ENCODE measurements at regions of chr12 and their contacts with region 1.

Region 1: DNA sequence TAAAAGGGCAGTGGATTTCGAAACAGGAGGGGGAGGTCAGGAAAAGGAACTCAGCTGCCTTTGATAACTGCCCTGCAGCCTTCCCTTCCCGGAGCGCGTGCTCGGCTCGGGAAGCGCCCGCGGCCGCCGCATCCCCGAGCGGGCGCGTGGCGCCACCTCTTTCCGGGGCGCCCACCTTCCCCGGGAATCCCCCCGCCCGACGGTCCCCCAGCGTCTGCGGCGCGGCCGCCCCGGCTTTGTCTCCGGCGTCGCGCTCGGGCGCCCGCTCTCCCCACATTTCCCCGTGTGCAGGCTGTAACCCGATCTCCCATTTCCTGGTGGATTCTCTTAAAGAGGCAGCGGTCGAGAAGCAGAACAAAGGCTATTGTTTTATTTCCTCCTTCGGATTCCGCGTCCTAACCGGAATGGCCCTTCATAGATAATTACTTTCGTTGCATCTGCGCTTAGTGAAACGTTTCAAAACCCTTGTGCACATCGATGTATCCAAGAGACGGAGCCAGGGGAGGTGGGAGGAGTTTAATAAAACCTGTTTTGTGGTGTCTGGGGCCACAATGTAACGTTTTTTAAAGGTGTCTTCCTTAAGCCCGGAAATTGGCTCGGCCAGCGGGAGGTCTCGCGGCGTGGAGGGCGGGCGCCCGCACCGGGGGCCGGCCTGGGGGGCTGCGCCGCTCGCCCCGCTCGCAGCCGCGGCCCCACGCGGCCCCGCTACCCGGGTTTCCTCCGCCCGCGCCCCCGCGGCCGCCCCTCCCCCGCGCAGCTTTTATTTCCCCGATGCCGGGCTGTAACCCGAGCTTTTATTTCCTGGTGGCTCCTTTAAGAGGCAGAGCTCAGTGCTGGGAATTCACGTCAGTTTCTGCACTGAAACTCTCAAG is at the start of gene ETV6:
- DNase-seq: peak; percentile 75 to 83 (median 77)
- ATAC-seq: peak; percentile 46 to 83 (median 67)
- H3K4me3 ChIP-seq: peak within 1 kb of the TSS; percentile 55 to 94 (median 85)
- H3K27ac ChIP-seq: peak within 1 kb of the TSS; percentile 89 to 100 (median 98)
- H3K4me1 ChIP-seq: peaks cover 0 to 35% (median 23%) of the 10 kb centered on the region in 12 donors
- H3K27me3 ChIP-seq: no peaks in the 10 kb centered on the region
- CTCF ChIP-seq: peak in 2 of 12 donors; percentile 7 to 15
- POLR2A ChIP-seq: peak in 1 of 2 donors; percentile 45
- total RNA-seq, gene ETV6: 7.1 to 37.3 (median 14.4) TPM

Region 2: GRCh38 chr12:11427341-11427740 is 221.7 kb before region 1 on chr12:
- intact Hi-C with region 1: no loop called
- DNase-seq: no peak
- ATAC-seq: no peak
- H3K4me3 ChIP-seq: no peak overlapping the region
- H3K27ac ChIP-seq: no peak overlapping the region
- H3K4me1 ChIP-seq: no peaks in the 10 kb centered on the region
- H3K27me3 ChIP-seq: no peaks in the 10 kb centered on the region
- CTCF ChIP-seq: no peak
- POLR2A ChIP-seq: no peak

Region 3: DNA sequence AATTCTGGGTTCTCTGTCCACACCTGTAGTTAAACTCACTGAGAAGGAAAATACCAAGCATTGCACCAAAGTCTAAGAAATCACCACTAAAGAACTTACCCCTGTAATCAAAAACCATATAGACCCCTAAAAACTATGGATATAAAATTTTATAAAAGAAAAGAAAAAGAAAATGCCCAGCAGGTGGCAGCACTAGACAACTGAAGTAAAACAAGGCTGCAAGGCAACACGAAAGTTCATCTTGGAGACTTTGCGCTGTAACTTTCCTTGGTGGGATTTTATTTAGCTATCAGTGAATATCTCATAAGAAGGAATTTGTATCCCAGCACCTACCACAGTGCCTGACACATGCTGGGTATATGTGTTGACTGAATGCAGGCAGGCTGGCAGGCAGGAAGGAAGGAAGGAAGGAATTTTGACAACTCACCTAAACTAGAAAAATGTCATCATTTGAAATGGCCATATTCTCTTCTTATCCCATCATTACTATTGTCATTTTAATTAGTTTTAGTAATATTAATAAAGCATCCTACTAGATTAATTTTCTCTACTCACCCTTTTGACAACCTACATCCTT is 67.8 kb before region 1 on chr12:
- intact Hi-C with region 1: loop called in 2 of 10 experiments (anchors 2 to 10 kb)
- DNase-seq: peak in 4 of 5 donors; percentile 44 to 63 (median 57)
- ATAC-seq: peak in 1 of 4 donors; percentile 31
- H3K4me3 ChIP-seq: no peak overlapping the region
- H3K27ac ChIP-seq: no peak overlapping the region
- H3K4me1 ChIP-seq: peaks cover 0 to 25% (median 0%) of the 10 kb centered on the region in 12 donors
- H3K27me3 ChIP-seq: no peaks in the 10 kb centered on the region
- CTCF ChIP-seq: peak; percentile 49 to 81 (median 72)
- POLR2A ChIP-seq: no peak

Region 4: DNA sequence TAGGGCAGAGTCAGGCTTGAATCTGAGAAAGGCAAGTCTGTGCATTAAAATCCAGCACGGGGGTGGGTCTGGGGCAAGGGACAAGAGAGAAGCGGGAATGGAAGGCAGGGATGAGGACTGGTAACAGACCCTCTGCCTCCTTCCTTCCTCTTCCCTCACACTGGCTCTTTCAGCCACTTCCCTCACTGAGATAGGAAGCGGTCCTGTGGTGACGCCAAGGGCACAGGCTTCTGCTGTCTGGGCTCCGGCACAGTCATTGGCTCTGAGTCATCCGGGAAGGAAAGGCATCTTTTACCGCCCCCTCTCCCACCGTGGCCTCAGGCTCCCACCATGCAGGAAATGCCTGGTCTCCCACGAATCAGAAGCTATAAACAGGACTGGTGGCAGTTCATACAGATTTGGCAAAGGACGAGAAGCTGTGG is 70.6 kb after region 1 on chr12:
- intact Hi-C with region 1: loop called in 3 of 10 experiments (anchors 5 kb)
- DNase-seq: peak; percentile 65 to 82 (median 67)
- ATAC-seq: peak; percentile 35 to 90 (median 82)
- H3K4me3 ChIP-seq: no peak overlapping the region
- H3K27ac ChIP-seq: peak overlapping the region in 7 of 12 donors; percentile 22 to 80 (median 44)
- H3K4me1 ChIP-seq: peaks cover 0 to 81% (median 37%) of the 10 kb centered on the region in 12 donors
- H3K27me3 ChIP-seq: no peaks in the 10 kb centered on the region
- CTCF ChIP-seq: no peak
- POLR2A ChIP-seq: no peak

Region 5: DNA sequence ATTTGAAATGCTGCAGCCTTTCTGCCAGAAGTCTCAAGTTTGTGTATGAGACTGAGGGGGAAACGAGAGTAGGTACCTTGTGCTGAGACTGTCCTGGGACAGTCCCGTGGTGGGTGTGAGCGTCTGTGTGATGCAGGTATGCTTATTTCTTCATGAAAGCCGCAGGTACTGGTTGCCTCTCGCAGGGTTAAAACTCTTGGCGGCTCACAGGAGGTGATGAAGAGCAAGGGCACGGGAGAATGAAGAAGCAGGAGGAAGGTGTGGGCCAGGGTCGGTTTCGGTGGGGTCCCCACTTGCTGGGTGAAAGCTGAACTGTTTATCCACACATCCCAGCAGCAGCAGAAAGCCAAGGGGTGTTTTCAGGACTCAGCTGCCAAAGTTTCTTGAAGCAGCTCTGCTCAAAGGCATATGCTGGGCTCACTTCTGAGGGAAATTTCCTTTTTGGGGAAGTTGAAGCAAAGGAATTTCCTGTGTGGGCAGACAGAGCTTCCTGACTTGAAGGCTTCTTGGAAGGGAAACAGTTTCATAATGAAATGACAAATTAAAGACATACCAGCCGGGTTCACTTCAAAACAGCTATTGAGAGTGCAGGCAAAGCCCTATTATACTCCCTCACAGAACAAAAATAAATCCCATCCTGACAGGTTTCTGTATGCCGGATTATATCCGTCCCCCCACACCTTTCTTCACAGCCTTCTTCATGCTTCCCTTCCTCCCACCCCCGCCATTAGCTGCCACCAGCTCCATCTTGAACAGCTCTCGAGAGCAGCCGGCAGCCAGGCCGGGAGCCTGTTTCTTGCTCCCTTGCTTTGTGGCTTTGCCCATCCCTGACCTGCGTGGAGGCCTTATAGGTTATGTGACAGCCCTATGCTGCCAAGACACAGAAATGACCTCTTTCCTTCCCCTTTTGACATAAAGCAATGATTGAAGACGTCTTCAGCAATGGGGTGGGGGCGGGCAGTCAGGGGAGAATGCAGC is 117.0 kb after region 1 on chr12:
- intact Hi-C with region 1: loop called in 1 of 10 experiments (anchors 5 kb)
- DNase-seq: peak in 4 of 5 donors; percentile 27 to 54 (median 38)
- ATAC-seq: peak; percentile 43 to 75 (median 65)
- H3K4me3 ChIP-seq: peak overlapping the region in 6 of 12 donors; percentile 2 to 23 (median 7)
- H3K27ac ChIP-seq: peak overlapping the region in 11 of 12 donors; percentile 64 to 90 (median 81)
- H3K4me1 ChIP-seq: peaks cover 5 to 98% (median 71%) of the 10 kb centered on the region in 12 donors
- H3K27me3 ChIP-seq: no peaks in the 10 kb centered on the region
- CTCF ChIP-seq: no peak
- POLR2A ChIP-seq: no peak

Region 6: GRCh38 chr12:11862798-11863197 is 213.7 kb after region 1 on chr12:
- intact Hi-C with region 1: loop called in 6 of 10 experiments (anchors 5 to 10 kb)
- DNase-seq: peak in 1 of 5 donors; percentile 38
- ATAC-seq: peak; percentile 51 to 79 (median 68)
- H3K4me3 ChIP-seq: peak overlapping the region in 1 of 12 donors; percentile 3
- H3K27ac ChIP-seq: peak overlapping the region; percentile 70 to 90 (median 84)
- H3K4me1 ChIP-seq: peaks cover 8 to 55% (median 47%) of the 10 kb centered on the region in 12 donors
- H3K27me3 ChIP-seq: no peaks in the 10 kb centered on the region
- CTCF ChIP-seq: no peak
- POLR2A ChIP-seq: no peak

Region 7: DNA sequence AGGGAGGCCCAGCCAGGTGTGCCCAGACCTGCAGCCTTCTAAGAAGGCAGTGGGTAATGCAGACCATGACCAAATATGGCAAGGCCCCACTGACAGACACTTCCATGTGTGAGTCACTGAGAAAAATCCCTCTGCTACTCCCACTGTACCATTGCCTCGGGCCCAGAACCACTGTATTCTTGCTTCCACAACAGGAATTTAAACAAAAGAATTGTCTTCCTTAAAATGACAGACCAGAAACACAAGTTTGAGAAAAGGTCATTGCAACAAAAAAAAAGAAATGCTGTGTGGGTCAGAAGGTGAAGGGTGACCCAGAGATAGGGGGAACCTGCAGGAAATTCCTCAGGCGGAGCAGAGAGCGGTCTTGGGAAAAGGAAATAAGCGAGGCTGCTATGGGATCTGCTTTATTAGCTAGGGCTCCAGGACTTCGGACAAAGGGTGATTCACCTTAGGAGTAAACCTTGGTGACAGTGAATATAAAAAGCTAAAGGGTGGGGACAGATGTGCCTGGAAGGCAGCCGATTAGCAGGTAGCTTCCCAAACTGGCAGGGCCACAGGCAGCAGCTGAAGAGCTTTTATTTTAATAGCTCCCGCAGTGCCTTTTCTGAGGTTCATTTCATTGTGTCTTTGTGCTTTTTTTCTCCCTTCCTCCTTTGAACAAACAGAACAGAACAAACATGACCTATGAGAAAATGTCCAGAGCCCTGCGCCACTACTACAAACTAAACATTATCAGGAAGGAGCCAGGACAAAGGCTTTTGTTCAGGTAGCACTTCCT is 236.4 kb after region 1 on chr12:
- intact Hi-C with region 1: loop called in 7 of 10 experiments (anchors 5 to 10 kb)
- DNase-seq: peak in 1 of 5 donors; percentile 35
- ATAC-seq: peak; percentile 23 to 81 (median 70)
- H3K4me3 ChIP-seq: no peak overlapping the region
- H3K27ac ChIP-seq: peak overlapping the region in 11 of 12 donors; percentile 32 to 89 (median 54)
- H3K4me1 ChIP-seq: peaks cover 0 to 57% (median 19%) of the 10 kb centered on the region in 12 donors
- H3K27me3 ChIP-seq: no peaks in the 10 kb centered on the region
- CTCF ChIP-seq: no peak
- POLR2A ChIP-seq: no peak

Region 8: DNA sequence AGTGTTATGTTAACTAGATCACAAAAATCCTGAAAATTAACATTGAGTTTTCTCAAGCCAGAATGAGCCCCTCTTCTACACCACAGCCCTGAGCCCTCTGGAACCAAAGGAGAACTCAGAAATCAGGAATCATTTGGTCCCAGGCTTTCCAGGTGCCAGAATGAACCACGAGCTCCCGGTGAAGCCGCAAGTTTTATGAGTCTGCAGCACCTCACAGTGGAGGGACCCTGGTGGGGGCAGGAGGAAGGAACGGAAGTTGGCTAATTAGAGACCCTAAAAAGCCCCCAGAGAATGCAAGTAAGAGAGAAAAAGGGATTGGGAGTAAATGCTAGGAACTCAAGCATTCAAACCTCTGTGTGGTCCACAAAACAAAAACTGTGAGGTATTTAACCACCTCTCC is 368.7 kb after region 1 on chr12:
- intact Hi-C with region 1: loop called in 1 of 10 experiments (anchors 5 kb)
- DNase-seq: peak in 1 of 5 donors; percentile 20
- ATAC-seq: peak in 3 of 4 donors; percentile 60 to 73 (median 67)
- H3K4me3 ChIP-seq: no peak overlapping the region
- H3K27ac ChIP-seq: no peak overlapping the region
- H3K4me1 ChIP-seq: peaks cover 0 to 13% (median 6%) of the 10 kb centered on the region in 12 donors
- H3K27me3 ChIP-seq: no peaks in the 10 kb centered on the region
- CTCF ChIP-seq: peak in 10 of 12 donors; percentile 25 to 56 (median 44)
- POLR2A ChIP-seq: no peak

Measured in heart left ventricle (tissue), 16 donors.